Sigmoid colon (tissue), 7 donors: ENCODE measurements at regions of chr20 and their contacts with region 1.

Region 1: DNA sequence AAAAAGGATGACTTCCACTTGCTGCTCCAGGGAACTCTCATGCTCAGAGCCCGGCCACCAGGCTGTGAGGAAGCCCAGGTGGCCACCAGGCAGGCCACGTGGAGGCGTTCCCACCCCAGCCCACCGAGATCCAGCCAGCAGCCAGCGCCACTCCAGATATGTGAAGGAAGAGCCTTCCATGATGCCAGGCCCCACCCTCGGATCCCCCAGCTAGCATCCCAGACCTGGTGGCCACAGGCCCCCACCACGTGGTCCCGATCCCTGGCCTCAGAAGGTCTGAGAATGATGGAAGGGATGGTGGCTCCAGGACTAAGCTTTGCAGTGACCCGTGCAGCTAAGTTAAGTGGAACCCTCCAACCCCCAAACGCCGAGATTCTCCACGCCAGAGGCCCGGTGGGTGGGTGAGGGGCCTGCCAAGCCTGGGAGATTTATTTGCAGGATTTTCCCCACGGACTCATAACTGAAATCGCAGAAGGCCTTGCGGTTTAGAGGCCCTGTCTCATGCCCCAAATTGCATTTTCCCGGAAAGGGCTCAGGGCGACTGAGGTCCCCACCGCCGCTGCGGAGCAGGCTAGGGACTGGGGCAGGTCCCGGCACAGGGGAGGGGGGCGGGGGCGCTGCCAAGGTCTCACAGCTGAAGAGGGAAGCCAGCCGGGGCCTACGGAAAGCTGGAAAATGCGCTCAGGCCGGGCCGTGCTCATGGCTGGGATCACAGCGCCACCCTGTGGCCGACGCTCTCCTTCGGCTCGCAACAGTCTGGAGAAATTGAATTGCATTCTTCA is 31.1 kb upstream of the CST7 start:
- DNase-seq: no peak
- H3K4me3 ChIP-seq: no peak overlapping the region
- H3K27ac ChIP-seq: no peak overlapping the region
- H3K4me1 ChIP-seq: peaks cover 0 to 10% (median 3%) of the 10 kb centered on the region in 4 donors
- H3K27me3 ChIP-seq: no peaks in the 10 kb centered on the region
- CTCF ChIP-seq: peak; percentile 37 to 79 (median 62)
- EP300 ChIP-seq: no peak
- POLR2A ChIP-seq: no peak

Region 2: DNA sequence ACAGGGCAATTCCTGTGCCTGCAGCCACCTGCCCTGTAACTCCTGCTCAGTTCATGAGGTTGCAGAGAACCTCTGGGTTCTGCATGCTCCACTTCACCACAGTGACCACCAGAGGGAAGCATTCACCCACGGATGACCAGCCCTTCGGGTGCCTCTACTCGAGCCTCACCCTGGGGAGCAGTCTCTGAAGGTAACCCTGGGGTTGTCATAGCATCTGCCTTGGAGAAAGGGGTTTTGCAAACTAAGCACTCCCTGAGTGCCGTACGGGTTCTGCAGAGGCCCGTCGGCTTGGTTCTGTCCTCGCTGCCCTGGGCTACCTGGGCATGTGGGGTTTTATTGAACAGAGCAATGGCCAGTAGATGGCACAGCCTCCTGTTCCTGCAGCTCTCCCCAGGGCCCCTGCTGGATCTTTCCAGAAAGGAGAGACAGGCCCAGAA is 1028.2 kb before region 1 on chr20:
- intact Hi-C with region 1: loop called (anchors 10 kb)
- DNase-seq: no peak
- H3K4me3 ChIP-seq: no peak overlapping the region
- H3K27ac ChIP-seq: no peak overlapping the region
- H3K4me1 ChIP-seq: no peaks in the 10 kb centered on the region
- H3K27me3 ChIP-seq: peaks cover 0 to 3% (median 0%) of the 10 kb centered on the region in 3 donors
- CTCF ChIP-seq: peak; percentile 7 to 60 (median 43)
- EP300 ChIP-seq: no peak
- POLR2A ChIP-seq: no peak

Region 3: DNA sequence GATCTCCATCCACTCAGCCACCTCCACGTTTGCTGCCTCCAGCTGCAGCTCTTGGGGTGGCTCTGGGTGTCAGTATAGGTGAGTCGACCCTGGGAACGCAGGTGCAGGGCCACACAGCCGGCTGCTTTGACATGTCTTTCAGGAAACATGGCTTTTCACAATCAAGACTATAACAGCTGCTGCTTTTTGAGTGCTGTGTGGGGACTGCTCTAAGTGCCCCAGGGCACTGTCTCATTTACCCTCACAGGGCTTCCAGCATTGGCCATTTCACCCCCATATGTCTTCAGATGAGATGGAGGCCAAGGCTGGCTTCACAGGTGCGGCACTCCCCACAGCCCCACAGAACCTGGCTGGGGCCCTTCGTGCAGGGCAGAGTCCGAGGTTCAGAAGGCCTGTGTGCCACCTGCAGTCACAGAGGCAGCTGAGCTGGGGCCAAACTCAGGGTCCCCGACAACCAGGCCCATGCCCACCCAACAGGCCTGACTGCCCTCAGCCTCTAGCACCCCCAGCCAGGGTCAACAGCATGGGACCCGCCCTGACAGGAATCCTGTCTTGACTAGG is 16.2 kb after region 1 on chr20:
- intact Hi-C with region 1: no loop called
- DNase-seq: peak; percentile 55
- H3K4me3 ChIP-seq: no peak overlapping the region
- H3K27ac ChIP-seq: no peak overlapping the region
- H3K4me1 ChIP-seq: no peaks in the 10 kb centered on the region
- H3K27me3 ChIP-seq: no peaks in the 10 kb centered on the region
- CTCF ChIP-seq: no peak
- EP300 ChIP-seq: no peak
- POLR2A ChIP-seq: no peak